Dorsolateral prefrontal cortex (tissue), 120 donors: ENCODE measurements at regions of chr11 and their contacts with region 1.

Region 1: GRCh38 chr11:14380947-14381561 is 22.1 kb upstream of the RRAS2 start:
- DNase-seq: peak; percentile 52 to 83 (median 68)
- H3K4me3 ChIP-seq: peak overlapping the region; percentile 31 to 88 (median 65)
- H3K27ac ChIP-seq: peak overlapping the region in 55 of 59 donors; percentile 30 to 94 (median 74)
- H3K27me3 ChIP-seq: no peaks in the 10 kb centered on the region
- CTCF ChIP-seq: peak in 11 of 56 donors; percentile 6 to 32 (median 16)

Region 2: DNA sequence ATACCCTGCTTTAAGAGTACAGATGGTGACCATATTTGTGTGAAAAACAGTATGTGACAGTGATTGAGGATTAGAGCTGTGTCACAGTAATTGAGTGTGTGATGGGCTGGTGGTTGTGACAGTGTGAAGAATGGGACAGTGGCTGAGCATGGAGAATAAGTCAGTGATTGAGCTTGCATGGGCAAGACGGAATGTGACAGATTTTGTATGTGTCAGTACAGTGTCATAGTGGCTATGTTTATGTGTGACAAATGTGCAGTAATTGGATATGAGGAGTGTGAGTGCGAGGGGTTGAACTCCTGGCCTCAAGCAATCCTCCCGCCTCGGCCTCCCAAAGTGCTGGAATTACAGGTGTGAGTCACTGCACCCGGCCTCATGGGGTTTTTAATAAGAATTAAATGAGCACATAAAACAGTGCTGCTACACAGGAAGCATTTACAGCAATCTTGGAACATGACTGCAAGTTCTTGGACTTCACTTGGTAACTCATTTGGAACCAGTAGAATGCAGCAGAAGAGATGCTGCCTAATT is 21.5 kb before region 1 on chr11:
- intact Hi-C with region 1: loop called in 1 of 2 experiments (anchors 2 kb)
- DNase-seq: no peak
- H3K4me3 ChIP-seq: peak overlapping the region in 57 of 59 donors; percentile 45 to 85 (median 70)
- H3K27ac ChIP-seq: peak overlapping the region in 3 of 59 donors; percentile 8 to 71 (median 45)
- H3K27me3 ChIP-seq: peaks cover 0 to 31% (median 0%) of the 10 kb centered on the region in 45 donors
- CTCF ChIP-seq: no peak

Region 3: GRCh38 chr11:14454861-14455632 is 74.0 kb after region 1 on chr11:
- intact Hi-C with region 1: loop called in 1 of 2 experiments (anchors 5 kb)
- DNase-seq: no peak
- H3K4me3 ChIP-seq: no peak overlapping the region
- H3K27ac ChIP-seq: peak overlapping the region in 8 of 59 donors; percentile 2 to 26 (median 13)
- H3K27me3 ChIP-seq: no peaks in the 10 kb centered on the region
- CTCF ChIP-seq: peak; percentile 48 to 87 (median 68)

Region 4: GRCh38 chr11:14499554-14500180 is 118.6 kb after region 1 on chr11 and contains the start of gene COPB1:
- intact Hi-C with region 1: loop called in 1 of 2 experiments (anchors 5 kb)
- DNase-seq: peak; percentile 81 to 94 (median 91)
- H3K4me3 ChIP-seq: peak within 1 kb of the TSS; percentile 55 to 89 (median 79)
- H3K27ac ChIP-seq: peak within 1 kb of the TSS; percentile 45 to 95 (median 85)
- H3K27me3 ChIP-seq: no peaks in the 10 kb centered on the region
- CTCF ChIP-seq: peak in 27 of 56 donors; percentile 7 to 35 (median 21)
- total RNA-seq, gene COPB1: 37.4 to 62.0 (median 47.8) TPM